Activated CD8-positive, alpha-beta T cell treated with anti-CD3 and anti-CD28 coated beads, Interleukin-2, amount 10 ng/mL, durations not matched to agents 7 days and 5 days (primary cell): ENCODE measurements at regions of chr14 and their contacts with region 1.

Region 1: DNA sequence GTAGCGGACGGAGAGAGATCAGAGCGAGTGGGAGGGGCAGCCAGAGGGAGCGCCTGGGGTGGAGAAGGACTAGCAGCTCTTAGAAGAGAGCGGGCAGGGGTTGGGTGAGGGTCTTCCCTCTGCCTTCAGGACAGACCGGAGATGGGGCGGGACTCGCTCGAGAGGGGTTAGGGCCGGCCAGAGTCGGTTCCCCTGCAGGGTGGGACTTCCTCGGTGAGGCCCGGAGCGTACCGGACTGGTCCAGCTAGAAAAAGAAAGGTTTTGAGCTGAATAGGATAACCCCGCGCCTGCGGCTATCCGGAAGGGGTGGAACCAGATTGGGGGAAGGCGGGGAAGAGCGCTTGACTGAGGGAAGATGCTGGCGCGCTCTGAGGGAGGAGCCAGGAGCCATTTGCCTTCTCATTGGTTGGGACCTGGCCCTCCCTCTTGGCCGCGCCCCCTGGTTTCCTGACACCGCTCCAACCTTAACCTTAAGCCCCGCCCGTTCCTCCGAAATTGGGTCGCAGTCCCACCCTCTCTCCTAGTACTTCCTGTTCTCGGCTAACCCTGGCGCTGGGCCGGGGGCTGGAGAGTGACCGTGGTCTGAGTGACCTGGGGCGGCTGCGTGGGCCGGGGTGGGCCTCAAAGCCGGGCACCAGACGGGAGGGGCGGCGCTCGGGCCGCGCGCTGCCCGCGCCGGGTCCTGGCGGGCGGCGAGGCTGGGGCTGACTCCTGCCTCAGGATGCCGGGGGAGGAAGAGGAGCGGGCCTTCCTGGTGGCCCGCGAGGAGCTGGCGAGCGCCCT is at the start of gene RNF31:
- DNase-seq: peak; percentile 100
- ATAC-seq: peak; percentile 87
- H3K4me3 Mint-ChIP-seq: peak within 1 kb of the TSS; percentile 88
- H3K27ac Mint-ChIP-seq: peak within 1 kb of the TSS; percentile 95
- H3K4me1 Mint-ChIP-seq: peaks cover 67% of the 10 kb centered on the region
- H3K27me3 Mint-ChIP-seq: no peaks in the 10 kb centered on the region
- total RNA-seq, gene RNF31: 123 to 142 TPM

Region 2: DNA sequence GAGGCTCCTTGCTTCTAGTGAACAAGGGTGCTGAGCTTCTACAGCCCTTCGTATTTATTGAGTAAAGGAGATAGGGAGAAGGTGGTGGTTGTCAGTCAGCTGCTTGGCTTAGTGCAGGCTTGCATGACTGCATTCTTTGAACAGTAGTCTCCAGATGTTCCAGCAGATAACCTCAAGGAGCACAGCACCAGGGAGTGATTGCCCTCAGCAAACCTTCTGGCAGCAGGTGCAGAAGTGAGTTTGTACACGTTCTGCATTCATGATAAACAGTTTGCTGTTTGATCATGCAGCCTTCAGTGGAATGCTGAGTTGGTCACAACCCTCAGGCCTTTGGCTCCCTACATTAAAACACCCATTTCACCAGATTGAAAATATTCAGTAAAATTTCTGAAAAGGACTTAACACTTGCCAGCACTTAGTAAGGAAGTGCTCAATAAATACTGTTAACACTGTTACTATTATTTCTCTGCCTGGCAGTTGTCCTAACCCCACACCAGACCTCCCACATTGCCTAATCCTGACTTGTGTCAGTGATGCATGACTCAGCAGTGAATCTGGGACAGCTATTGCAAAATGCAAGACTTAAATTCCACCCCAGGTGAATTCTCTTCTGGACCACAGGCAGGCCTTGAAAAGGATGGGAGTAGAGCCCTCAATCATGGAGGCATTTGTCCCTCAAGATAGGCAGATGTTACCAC is 114.3 kb before region 1 on chr14:
- CTCF ChIA-PET with region 1: no interaction called
- POLR2A ChIA-PET with region 1: no interaction called
- DNase-seq: no peak
- ATAC-seq: no peak
- H3K4me3 Mint-ChIP-seq: no peak overlapping the region
- H3K27ac Mint-ChIP-seq: no peak overlapping the region
- H3K4me1 Mint-ChIP-seq: peaks cover 12% of the 10 kb centered on the region
- H3K27me3 Mint-ChIP-seq: peaks cover 5% of the 10 kb centered on the region

Region 3: DNA sequence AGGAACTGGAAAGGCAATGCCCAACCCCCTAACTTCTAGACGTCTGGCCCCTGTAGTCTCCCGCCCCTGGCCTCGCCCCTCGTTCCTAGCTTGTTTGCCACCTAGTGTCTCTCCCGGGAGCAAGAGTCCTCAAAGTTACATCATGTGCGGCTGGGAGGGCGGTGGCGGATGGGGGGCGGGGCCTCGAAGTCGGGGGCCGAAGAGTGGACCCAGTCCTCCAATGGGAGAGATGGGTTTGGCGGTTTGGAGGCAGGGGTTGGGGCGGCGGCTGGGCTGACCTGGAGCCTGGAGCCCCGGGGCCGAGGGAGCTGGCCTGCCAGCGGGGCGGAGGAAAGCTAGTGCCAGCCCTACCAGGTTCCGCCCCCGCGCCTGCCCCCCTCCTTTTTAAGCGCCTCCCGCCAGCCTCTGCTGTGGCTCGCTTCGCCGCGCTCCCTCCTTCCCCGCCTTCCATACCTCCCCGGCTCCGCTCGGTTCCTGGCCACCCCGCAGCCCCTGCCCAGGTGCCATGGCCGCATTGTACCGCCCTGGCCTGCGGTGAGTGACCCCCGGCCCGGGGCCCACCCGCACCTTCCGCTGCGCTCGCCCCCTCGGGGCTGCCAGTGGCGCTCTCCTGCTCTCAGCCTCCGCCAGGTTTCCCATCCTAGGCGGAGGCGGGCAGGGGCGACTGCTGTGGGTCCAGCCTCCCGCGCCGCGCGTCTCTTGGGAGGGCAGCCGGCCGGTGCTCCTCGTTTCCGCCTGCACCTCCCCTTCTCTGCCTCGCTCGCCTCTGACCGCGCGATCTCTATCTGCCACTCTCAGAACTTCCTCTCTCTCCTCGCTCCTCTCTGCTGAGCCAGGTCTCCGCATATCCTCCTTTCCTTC is 53.0 kb before region 1 on chr14 and contains the start of gene PCK2:
- CTCF ChIA-PET with region 1: no interaction called
- POLR2A ChIA-PET with region 1: interaction called, 10 read pairs
- DNase-seq: peak; percentile 84
- ATAC-seq: peak; percentile 80
- H3K4me3 Mint-ChIP-seq: peak within 1 kb of the TSS; percentile 100
- H3K27ac Mint-ChIP-seq: peak within 1 kb of the TSS; percentile 99
- H3K4me1 Mint-ChIP-seq: peaks cover 42% of the 10 kb centered on the region
- H3K27me3 Mint-ChIP-seq: no peaks in the 10 kb centered on the region
- total RNA-seq, gene PCK2: 49.6 to 54.9 TPM

Region 4: DNA sequence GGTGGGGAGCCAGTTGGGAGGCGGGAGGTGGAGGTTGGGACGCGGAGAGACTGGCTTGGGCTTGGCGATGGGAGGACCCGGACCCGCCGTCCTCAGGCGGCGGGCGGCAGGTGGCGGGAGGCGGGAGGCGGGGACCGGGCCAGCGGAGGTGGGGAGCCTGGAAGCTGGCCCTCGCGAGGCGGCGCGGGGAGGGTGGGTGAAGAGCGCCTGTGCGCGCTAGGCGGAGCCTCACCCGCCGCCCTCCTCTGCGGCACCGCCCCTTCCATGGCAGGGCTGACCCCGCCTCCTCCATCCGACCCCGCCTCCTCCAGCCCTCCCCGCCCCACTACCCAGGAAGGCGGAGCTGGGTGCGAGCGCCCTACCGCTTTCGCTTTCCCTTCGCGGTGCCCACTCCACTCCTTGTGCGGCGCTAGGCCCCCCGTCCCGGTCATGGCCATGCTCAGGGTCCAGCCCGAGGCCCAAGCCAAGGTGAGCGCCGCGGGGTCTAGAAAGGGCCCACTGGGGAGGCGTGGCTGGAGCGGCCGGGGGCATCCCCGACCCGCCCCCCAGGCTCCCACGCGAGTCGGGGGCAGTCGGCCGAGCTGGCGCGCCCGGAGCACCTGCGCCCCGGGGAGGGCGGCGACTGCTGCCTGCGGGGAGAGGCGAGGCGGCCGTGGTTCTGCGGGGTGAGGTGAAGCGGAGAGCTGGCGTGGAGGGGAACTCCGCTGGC is 11.2 kb before region 1 on chr14 and contains the start of gene PSME1:
- CTCF ChIA-PET with region 1: interaction called, 25 read pairs
- POLR2A ChIA-PET with region 1: interaction called, 48 read pairs
- DNase-seq: peak; percentile 95
- ATAC-seq: peak; percentile 91
- H3K4me3 Mint-ChIP-seq: peak within 1 kb of the TSS; percentile 86
- H3K27ac Mint-ChIP-seq: peak within 1 kb of the TSS; percentile 91
- H3K4me1 Mint-ChIP-seq: peaks cover 55% of the 10 kb centered on the region
- H3K27me3 Mint-ChIP-seq: no peaks in the 10 kb centered on the region
- total RNA-seq, gene PSME1: 516 to 530 TPM

Region 5: GRCh38 chr14:24188251-24189058 is 41.3 kb after region 1 on chr14 and contains the start of gene IPO4:
- CTCF ChIA-PET with region 1: interaction called, 3 read pairs
- POLR2A ChIA-PET with region 1: interaction called, 13 read pairs
- DNase-seq: peak; percentile 97
- ATAC-seq: peak; percentile 84
- H3K4me3 Mint-ChIP-seq: peak within 1 kb of the TSS; percentile 92
- H3K27ac Mint-ChIP-seq: peak within 1 kb of the TSS; percentile 87
- H3K4me1 Mint-ChIP-seq: peaks cover 49% of the 10 kb centered on the region
- H3K27me3 Mint-ChIP-seq: no peaks in the 10 kb centered on the region
- total RNA-seq, gene IPO4: 56.3 to 60.1 TPM

Region 6: DNA sequence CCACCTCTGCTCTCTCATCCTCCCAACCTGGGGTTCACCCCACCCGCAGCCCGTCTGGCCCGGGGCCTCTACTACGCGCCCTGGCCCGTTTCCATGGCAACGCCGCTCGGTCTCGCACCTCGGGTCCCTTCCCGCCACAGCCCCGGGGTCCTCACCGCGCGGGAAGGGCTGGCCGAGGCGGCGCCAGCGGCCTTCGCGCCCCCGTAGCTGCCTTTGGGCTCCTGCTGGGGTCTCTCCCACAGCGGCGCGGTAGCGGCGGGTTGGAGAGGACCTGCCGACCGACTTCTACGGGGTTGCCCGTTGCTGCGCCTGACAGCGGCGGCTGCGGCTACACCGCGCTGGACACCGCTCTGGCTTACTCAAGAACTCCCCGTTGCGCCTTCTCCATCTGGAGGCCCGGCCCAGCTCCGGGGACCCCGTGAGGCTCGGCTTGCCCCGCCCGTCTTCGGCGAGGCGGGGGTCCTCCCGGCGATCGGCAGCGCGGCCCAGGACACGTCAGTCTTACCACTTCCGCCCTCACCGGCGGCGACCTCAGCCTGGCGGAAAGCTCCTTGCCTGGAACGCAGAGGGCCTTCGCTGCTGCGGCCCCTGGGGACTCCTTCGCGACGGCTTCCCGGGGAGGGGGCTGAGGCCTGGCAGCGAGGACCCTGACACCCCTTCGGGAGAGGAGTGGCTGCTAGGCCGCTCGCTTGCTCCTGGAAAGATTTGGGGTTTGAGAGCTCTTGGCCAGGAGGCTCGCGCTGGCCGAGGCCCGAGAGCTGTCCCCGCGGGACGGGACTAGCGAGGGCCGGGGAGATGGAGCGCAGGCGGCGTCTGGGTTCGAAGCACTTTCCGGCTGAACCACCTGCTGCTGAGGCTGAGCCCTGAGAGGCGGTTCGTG is 48.3 kb after region 1 on chr14 and contains the start of gene TM9SF1:
- CTCF ChIA-PET with region 1: interaction called, 3 read pairs
- POLR2A ChIA-PET with region 1: interaction called, 12 read pairs
- DNase-seq: peak; percentile 92
- ATAC-seq: peak; percentile 88
- H3K4me3 Mint-ChIP-seq: peak within 1 kb of the TSS; percentile 88
- H3K27ac Mint-ChIP-seq: peak within 1 kb of the TSS; percentile 96
- H3K4me1 Mint-ChIP-seq: peaks cover 56% of the 10 kb centered on the region
- H3K27me3 Mint-ChIP-seq: no peaks in the 10 kb centered on the region
- total RNA-seq, gene TM9SF1: 29.3 to 32.8 TPM